Aorta (tissue), 5 donors: ENCODE measurements at regions of chr19 and their contacts with region 1.

Region 1: DNA sequence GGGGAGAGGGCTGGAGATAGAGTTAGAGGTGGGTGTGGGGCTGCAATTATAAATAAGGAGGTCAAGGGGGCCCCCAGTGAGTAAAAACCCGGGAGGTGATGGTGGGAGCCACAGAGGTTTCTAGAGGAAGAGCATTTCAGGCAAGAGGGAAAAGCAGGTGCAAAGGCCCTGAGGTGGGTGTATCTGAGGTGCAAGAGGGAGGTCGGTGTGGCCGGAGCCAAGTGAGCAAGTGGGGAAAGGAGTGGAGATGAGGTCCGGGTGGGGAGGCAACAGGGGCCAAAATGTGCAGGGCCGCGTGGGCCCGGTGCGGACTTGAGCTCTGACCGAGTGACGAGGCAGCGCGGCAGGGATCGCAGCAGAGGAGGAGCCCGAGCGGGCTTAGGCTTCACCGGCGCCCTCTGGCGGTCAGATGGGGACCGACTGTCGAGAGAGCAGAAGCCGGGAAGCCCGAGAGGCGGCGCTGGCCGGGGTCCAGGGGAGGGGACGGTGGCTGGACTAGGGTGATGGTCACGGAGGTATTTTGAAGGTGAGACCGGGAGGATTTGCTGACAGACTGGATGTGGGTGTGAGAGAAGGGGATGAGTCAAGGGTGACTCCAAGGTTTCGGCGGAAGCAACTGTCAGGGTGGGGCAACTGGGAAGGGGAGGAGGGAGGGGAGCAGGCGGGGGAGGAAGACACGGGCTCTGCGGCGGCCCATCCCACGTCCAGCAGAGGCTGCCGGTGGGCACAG is 17.7 kb upstream of the SPACA4 start:
- DNase-seq: peak; percentile 95 to 98
- ATAC-seq: peak; percentile 91
- H3K4me3 ChIP-seq: no peak overlapping the region
- H3K27ac ChIP-seq: no peak overlapping the region
- H3K4me1 ChIP-seq: no peaks in the 10 kb centered on the region
- H3K27me3 ChIP-seq: no peaks in the 10 kb centered on the region

Region 2: DNA sequence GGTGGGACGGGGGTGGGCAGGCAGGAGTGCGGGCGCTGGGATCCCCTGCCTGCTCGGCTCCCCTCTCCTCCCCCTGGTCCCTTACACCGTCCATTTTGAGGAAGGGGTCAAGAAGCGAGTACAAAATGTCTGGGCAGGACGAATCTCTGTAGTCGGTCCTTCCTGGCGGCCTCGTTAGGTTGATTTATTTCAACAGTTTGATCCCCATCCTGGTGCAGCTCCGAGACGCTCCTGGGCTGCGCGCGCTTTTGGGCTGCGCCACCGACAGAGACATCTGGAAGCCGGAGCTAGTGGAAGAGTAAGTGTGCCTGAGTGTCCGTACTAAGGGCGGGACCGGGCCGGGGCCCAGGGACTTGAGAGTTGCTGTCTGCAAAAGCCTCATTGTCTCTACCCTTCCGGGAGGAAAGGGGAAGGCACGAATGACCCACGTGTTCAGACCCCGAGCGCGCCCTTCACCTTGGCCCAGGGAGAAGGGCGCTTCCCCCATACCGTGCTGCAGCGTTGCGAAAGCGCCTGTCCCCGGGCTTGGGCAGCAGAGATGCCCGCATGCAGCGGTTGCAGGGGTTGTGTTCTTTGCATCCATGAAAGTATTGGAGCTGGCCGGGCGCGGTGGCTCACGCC is 317.2 kb before region 1 on chr19:
- intact Hi-C with region 1: loop called (anchors 5 to 10 kb)
- DNase-seq: peak; percentile 62 to 80
- ATAC-seq: peak; percentile 76
- H3K4me3 ChIP-seq: peak overlapping the region in 1 of 2 donors; percentile 15
- H3K27ac ChIP-seq: no peak overlapping the region
- H3K4me1 ChIP-seq: no peaks in the 10 kb centered on the region
- H3K27me3 ChIP-seq: no peaks in the 10 kb centered on the region

Region 3: DNA sequence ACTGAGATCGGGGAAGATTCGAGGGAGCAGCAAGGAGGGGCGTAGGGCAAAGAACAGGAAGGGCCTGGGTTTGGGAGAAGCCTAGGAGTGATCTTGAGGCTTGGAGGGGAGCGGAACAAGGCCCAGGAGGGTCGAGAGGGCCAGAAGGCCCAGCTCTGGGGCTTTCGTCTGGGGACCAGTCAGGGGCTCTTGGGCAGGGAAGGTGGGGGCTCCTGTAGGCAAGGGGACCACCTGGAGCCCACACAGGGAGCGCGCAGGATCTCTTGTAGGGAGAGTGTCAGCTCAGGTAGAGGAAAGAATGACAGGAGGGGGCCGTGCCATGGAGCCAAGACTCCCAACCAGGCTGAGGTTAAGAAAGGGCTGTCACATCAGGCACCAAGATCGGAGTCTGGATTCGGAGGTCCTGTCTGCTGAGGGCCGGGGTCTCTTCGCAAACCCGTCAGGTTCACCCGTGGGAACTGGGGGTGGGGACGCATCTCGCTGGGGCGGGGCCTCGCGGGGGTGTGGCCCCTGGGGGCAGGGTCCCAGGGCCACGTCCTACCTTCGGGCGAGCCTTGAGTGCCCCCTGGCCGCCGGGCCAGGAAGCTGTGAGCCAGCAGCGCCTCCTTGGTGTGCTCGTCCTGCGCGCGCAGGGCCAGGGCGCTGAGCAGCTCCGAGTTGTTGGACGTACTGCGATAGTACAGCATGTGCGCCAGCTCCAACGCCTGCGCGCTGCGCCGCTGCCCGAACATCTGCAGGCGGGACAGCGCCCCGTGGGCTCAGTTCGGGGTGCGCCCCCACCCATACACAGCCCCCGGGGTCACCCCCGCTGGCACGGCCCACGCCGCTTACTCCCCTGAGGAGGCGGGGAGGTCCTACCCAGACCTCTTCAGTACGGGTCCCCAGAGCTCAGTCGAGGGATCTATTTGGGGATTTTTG is 255.1 kb before region 1 on chr19:
- intact Hi-C with region 1: loop called in 1 of 2 experiments (anchors 10 kb)
- DNase-seq: peak; percentile 96
- ATAC-seq: peak; percentile 93
- H3K4me3 ChIP-seq: no peak overlapping the region
- H3K27ac ChIP-seq: peak overlapping the region in 1 of 2 donors; percentile 41
- H3K4me1 ChIP-seq: no peaks in the 10 kb centered on the region
- H3K27me3 ChIP-seq: no peaks in the 10 kb centered on the region

Region 4: GRCh38 chr19:48445606-48446481 is 143.0 kb before region 1 on chr19 and contains the start of gene GRWD1:
- intact Hi-C with region 1: loop called in 1 of 2 experiments (anchors 5 kb)
- DNase-seq: peak; percentile 95
- ATAC-seq: peak; percentile 90
- H3K4me3 ChIP-seq: peak within 1 kb of the TSS; percentile 68 to 75
- H3K27ac ChIP-seq: peak within 1 kb of the TSS in 1 of 2 donors; percentile 58
- H3K4me1 ChIP-seq: no peaks in the 10 kb centered on the region
- H3K27me3 ChIP-seq: no peaks in the 10 kb centered on the region
- total RNA-seq, gene GRWD1: 21.4 to 25.8 TPM

Region 5: GRCh38 chr19:48881741-48882657 is 293.2 kb after region 1 on chr19:
- intact Hi-C with region 1: no loop called
- DNase-seq: peak in 1 of 2 donors; percentile 66
- ATAC-seq: peak; percentile 27
- H3K4me3 ChIP-seq: no peak overlapping the region
- H3K27ac ChIP-seq: peak overlapping the region in 1 of 2 donors; percentile 5
- H3K4me1 ChIP-seq: no peaks in the 10 kb centered on the region
- H3K27me3 ChIP-seq: no peaks in the 10 kb centered on the region